Activated CD8-positive, alpha-beta T cell treated with anti-CD3 and anti-CD28 coated beads, Interleukin-2, amount 10 ng/mL, durations not matched to agents 7 days and 5 days (primary cell): ENCODE measurements at regions of chr17 and their contacts with region 1.

Region 1: DNA sequence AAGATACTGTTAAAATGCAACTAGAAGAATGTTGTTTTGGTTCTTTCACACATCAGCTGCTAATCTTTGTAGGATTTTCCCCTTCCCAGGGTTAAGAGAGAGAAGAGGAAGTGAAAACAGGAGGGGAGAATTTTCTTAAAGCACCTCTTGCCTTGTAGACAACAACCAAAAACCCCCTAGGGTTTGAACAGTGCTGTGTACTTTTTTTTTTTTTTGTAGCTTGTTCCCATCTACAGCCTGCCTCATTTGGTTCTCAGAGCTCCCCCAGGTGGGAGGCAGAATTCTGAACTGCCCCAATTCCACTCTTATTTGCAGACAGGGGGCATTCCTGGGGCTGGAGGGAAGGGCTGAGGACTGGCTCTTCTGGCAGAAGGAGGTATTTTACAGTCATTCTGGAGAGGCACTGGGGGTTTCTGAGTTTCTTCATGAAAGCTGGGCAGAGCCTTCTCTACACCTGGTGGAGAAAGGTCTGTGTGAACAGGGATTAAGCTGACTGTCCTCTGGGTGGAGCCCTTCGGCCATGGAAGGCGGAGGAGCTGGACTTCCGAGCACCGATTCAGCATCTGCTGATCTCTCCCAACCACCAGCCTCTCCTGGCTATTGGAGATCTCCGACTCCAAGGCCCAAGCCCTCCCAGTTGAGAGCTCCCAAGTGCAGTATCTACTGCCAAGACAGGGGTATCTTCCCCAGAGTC is 32.2 kb downstream of the SMARCE1 start:
- DNase-seq: peak; percentile 47
- ATAC-seq: peak; percentile 24
- H3K4me3 Mint-ChIP-seq: peak overlapping the region; percentile 54
- H3K27ac Mint-ChIP-seq: peak overlapping the region; percentile 85
- H3K4me1 Mint-ChIP-seq: peaks cover 88% of the 10 kb centered on the region
- H3K27me3 Mint-ChIP-seq: no peaks in the 10 kb centered on the region

Region 2: GRCh38 chr17:40548982-40549685 is 66.3 kb before region 1 on chr17:
- CTCF ChIA-PET with region 1: interaction called, 313 read pairs
- POLR2A ChIA-PET with region 1: interaction called, 454 read pairs
- DNase-seq: peak; percentile 25
- ATAC-seq: no peak
- H3K4me3 Mint-ChIP-seq: peak overlapping the region; percentile 59
- H3K27ac Mint-ChIP-seq: peak overlapping the region; percentile 93
- H3K4me1 Mint-ChIP-seq: peaks cover 92% of the 10 kb centered on the region
- H3K27me3 Mint-ChIP-seq: no peaks in the 10 kb centered on the region

Region 3: DNA sequence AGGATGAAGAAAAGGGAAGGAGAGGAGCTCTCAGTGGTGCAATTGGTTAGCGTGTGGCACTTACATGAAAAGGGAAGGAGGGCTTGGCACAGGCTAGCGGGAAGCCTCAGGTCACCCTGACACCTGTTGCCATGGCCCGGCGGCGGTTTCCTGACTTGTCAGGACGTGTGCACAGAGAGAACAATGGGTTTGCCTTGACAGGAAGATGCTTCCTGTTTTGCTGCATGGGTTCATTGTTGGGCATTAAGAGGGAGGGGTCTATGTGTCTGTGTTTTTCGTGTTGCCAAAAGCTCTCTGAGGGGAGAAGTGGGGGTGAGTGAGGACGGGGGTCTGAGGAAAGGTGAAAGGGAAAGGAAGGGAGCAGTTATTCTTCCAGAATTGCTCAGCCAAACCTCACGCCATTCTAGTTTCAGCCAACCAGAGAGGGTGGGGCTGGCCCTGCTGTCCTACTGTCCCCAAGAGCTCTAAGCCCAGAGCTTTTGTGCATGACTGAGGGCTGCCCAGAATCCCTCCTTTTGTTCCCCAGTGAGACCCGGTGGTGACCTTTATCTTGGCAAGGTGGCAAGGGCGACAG is 33.0 kb before region 1 on chr17:
- CTCF ChIA-PET with region 1: interaction called, 31 read pairs
- POLR2A ChIA-PET with region 1: interaction called, 7 read pairs
- DNase-seq: peak; percentile 83
- ATAC-seq: peak; percentile 83
- H3K4me3 Mint-ChIP-seq: peak overlapping the region; percentile 56
- H3K27ac Mint-ChIP-seq: peak overlapping the region; percentile 88
- H3K4me1 Mint-ChIP-seq: peaks cover 92% of the 10 kb centered on the region
- H3K27me3 Mint-ChIP-seq: no peaks in the 10 kb centered on the region

Region 4: DNA sequence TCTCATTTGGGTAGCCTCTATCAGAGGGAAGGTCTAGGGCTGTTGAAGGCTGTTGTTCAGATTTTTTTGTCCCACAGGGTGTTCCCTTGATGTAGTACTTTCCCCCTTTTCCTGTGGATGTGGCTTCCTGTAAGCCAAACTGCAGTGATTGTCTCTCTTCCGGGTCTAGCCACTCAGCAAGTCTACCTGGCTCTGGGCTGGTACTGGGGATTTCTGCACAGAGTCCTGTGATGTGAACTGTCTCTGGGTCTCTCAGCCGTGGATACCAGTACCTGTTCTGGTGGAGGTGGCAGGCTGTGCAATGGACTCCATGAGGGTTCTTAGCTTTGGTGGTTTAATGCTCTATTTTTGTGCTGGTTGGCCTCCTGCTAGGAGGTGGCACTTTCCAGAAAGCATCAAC is 26.9 kb before region 1 on chr17:
- CTCF ChIA-PET with region 1: interaction called, 16 read pairs
- POLR2A ChIA-PET with region 1: no interaction called
- DNase-seq: no peak
- ATAC-seq: peak; percentile 19
- H3K4me3 Mint-ChIP-seq: peak overlapping the region; percentile 26
- H3K27ac Mint-ChIP-seq: peak overlapping the region; percentile 51
- H3K4me1 Mint-ChIP-seq: peaks cover 71% of the 10 kb centered on the region
- H3K27me3 Mint-ChIP-seq: no peaks in the 10 kb centered on the region

Region 5: DNA sequence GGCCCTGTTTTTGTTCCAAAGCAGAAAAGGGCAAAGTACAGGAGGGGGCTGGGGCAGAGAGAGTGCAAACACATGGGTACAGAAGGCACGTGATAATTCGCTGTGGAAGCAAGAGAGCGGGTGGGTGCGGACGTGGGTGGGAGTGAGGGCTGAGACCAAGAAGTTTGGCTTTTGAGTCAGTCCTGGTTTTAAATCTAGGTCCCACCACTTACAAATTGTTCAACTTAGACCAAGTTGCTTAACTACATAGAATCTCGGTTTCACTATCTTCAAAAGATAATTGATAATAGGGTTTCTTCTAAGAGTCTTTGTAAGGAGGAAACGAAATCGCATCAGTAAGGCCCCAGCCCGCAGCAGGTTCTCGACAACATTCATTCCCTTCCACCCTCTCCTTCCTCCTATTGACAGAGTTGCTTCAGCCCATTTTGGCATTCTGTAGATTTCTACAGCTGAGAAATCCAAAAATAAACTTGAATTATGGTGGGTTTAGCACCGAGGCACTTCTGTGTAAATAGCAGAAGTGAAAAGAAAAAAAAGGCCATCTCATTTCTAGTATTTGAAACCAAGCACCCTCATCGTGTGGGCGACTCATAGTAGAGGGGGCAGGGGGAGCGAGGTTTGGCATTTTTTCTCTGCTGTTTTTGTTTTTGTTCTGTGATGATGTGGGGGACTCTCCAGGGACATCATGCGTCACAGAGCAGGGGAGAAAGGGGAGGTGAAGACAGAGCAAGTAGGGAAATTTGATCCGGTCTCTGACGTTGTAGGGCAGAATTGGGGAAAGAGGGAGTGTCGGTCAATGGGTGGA is 16.6 kb before region 1 on chr17:
- CTCF ChIA-PET with region 1: interaction called, 47 read pairs
- POLR2A ChIA-PET with region 1: interaction called, 38 read pairs
- DNase-seq: peak; percentile 67
- ATAC-seq: peak; percentile 35
- H3K4me3 Mint-ChIP-seq: peak overlapping the region; percentile 69
- H3K27ac Mint-ChIP-seq: peak overlapping the region; percentile 95
- H3K4me1 Mint-ChIP-seq: peaks cover 94% of the 10 kb centered on the region
- H3K27me3 Mint-ChIP-seq: no peaks in the 10 kb centered on the region

Region 6: GRCh38 chr17:40647624-40648383 is 32.4 kb after region 1 on chr17 and contains the start of gene SMARCE1:
- CTCF ChIA-PET with region 1: interaction called, 16 read pairs
- POLR2A ChIA-PET with region 1: interaction called, 12 read pairs
- DNase-seq: peak; percentile 78
- ATAC-seq: peak; percentile 79
- H3K4me3 Mint-ChIP-seq: peak within 1 kb of the TSS; percentile 96
- H3K27ac Mint-ChIP-seq: peak within 1 kb of the TSS; percentile 97
- H3K4me1 Mint-ChIP-seq: peaks cover 45% of the 10 kb centered on the region
- H3K27me3 Mint-ChIP-seq: no peaks in the 10 kb centered on the region
- total RNA-seq, gene SMARCE1: 104 to 110 TPM

Region 7: DNA sequence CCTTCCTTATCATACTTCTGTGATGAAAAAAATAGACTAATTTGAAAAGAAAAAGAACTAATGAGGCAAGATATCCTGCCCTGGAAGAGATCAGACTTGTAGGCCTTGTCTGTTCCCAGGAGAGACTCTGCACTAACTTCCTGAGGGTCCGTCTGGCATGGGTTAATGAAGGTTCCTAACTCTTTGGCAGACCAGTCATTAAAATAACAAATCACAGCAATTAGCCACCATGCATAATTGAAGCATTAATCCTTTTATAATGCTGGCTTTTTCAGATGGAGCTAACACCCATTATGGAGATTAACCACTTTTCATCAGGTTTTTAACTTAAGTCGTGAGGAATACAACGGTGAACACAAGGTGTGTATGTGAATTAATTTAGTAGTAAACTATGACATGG is 217.4 kb after region 1 on chr17:
- CTCF ChIA-PET with region 1: no interaction called
- POLR2A ChIA-PET with region 1: no interaction called
- DNase-seq: no peak
- ATAC-seq: no peak
- H3K4me3 Mint-ChIP-seq: no peak overlapping the region
- H3K27ac Mint-ChIP-seq: no peak overlapping the region
- H3K4me1 Mint-ChIP-seq: peaks cover 9% of the 10 kb centered on the region
- H3K27me3 Mint-ChIP-seq: no peaks in the 10 kb centered on the region